ENCODE measurements at regions of chr15 and their contacts with region 1.

Region 1: GRCh38 chr15:89206908-89207331 is 14.5 kb downstream of the RLBP1 start:
- DNase-seq: peak; percentile 51 to 90 (median 78)
- ATAC-seq: peak; percentile 61 to 92 (median 90)
- H3K4me3 ChIP-seq: peak overlapping the region in 2 of 4 donors; percentile 18 to 37
- H3K27ac ChIP-seq: no peak overlapping the region
- H3K4me1 ChIP-seq: peaks cover 0 to 5% (median 5%) of the 10 kb centered on the region in 3 donors
- H3K27me3 ChIP-seq: no peaks in the 10 kb centered on the region
- CTCF ChIP-seq: peak; percentile 95 to 99 (median 96)

Region 2: DNA sequence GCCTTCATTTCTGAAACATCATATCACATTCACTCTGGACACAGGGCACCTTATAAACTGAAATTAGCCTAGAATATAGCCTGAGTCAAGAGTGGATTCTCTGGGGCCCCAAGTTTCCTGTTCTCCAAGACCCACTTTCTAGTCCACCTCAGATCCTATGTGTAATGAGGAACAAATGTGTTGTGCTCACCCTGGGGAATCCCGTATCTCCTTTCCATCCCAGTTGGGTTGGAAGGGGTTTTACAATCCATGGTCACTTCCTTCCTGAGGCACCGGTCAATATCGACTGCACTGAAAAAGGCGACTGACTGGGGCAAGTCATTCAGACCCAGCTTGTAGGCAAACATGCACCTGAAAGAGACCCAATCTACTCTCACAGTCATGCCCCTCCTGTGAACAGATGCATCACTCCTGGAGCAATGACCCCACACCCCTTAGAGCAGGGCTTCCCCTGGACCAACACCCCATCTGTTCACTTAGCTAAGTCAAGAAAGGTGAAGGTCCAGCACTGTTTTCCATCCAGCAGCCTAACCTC is 110.3 kb after region 1 on chr15:
- intact Hi-C with region 1: loop called in 1 of 3 experiments (anchors 10 kb)
- DNase-seq: no peak
- ATAC-seq: no peak
- H3K4me3 ChIP-seq: no peak overlapping the region
- H3K27ac ChIP-seq: no peak overlapping the region
- H3K4me1 ChIP-seq: no peaks in the 10 kb centered on the region
- H3K27me3 ChIP-seq: no peaks in the 10 kb centered on the region
- CTCF ChIP-seq: no peak

Measured in pancreas (tissue), 10 donors.